Colonic mucosa (tissue), 4 donors: ENCODE measurements at regions of chr6 and their contacts with region 1.

Region 1: DNA sequence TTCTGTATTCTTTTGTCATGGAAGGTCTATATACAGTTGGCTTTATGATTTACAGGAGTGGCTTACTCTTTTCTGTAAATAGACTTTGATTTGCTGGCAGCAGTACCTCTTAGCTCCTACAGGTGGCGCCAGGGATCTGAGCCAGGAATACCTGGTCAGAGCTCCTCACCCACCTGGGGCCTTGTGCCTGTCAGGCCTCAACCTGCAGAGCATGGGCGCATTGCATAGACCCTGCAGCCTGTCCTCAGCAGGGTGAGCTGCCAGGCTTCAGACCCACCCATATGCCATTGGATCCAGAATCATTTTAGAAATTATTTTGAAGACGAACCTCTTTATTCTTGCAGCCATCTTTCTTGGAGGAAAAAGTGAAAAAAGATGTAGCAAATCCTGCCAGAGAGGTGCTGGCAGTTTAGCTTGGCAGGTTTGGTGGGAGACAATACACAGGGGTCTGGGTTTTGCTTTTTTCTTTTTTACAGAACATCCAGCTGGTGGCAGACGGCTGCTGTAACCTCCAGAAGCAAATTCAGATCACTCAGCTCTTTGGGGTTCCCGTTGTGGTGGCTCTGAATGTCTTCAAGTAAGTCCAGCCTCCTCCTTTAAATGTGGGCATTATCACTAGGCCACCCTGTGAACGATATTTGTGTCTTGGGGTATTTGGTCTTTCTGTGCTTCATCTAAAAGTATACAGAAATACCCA is 149.1 kb downstream of the MTHFD1L start:
- DNase-seq: peak; percentile 70
- H3K4me3 ChIP-seq: no peak overlapping the region
- H3K27ac ChIP-seq: no peak overlapping the region
- H3K4me1 ChIP-seq: no peaks in the 10 kb centered on the region
- H3K27me3 ChIP-seq: no peaks in the 10 kb centered on the region
- CTCF ChIP-seq: peak; percentile 98

Region 2: DNA sequence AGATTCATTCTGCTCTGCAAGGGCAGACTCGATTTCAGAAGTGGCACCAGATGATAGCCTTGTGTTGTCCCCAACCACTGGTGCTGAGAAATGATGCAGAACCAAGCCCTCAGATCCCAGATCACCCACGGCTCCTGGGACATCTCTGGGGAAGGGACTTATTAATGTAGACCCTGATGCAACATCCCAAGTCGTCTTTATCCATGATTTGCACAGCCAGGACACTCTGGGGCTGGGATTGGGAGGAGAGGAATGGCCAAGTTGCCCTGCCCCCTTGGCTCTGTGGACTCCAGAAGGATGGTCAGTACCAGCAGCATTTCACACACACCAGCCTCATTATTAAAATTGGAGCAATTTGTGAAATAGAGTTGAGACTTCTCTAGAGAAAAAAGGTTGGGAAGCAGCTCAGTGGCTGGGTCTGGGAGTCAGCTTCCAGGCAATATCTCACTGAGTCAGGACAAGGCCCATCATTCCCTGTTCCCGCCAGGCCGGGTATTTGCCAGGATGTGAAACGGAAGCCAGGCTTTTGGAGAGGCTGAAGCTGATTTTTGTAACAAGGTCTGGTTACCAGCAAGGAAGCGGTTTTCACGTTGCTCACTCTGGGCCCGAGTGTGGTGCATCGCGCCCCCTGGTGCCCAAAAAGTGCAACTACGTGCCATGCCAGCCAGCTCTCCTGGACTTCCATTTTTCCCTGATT is 309.4 kb after region 1 on chr6:
- intact Hi-C with region 1: loop called (anchors 2 kb)
- DNase-seq: peak; percentile 83
- H3K4me3 ChIP-seq: no peak overlapping the region
- H3K27ac ChIP-seq: no peak overlapping the region
- H3K4me1 ChIP-seq: no peaks in the 10 kb centered on the region
- H3K27me3 ChIP-seq: peaks cover 11% of the 10 kb centered on the region
- CTCF ChIP-seq: peak; percentile 98